Vagina (tissue), 2 donors: ENCODE measurements at regions of chr13 and their contacts with region 1.

Region 1: GRCh38 chr13:20489185-20489820 is 36.4 kb downstream of the CRYL1 start:
- DNase-seq: no peak
- H3K4me3 ChIP-seq: no peak overlapping the region
- H3K27ac ChIP-seq: no peak overlapping the region
- H3K4me1 ChIP-seq: no peaks in the 10 kb centered on the region
- H3K27me3 ChIP-seq: no peaks in the 10 kb centered on the region
- CTCF ChIP-seq: no peak
- POLR2A ChIP-seq: no peak

Region 2: GRCh38 chr13:20197361-20197834 is 291.9 kb before region 1 on chr13:
- intact Hi-C with region 1: loop called (anchors 10 kb)
- DNase-seq: no peak
- H3K4me3 ChIP-seq: no peak overlapping the region
- H3K27ac ChIP-seq: no peak overlapping the region
- H3K4me1 ChIP-seq: peaks cover 20% of the 10 kb centered on the region
- H3K27me3 ChIP-seq: peaks cover 6% of the 10 kb centered on the region
- CTCF ChIP-seq: peak; percentile 22 to 49 (median 44)
- POLR2A ChIP-seq: no peak

Region 3: GRCh38 chr13:20534038-20534608 is 44.8 kb after region 1 on chr13:
- intact Hi-C with region 1: no loop called
- DNase-seq: no peak
- H3K4me3 ChIP-seq: no peak overlapping the region
- H3K27ac ChIP-seq: no peak overlapping the region
- H3K4me1 ChIP-seq: no peaks in the 10 kb centered on the region
- H3K27me3 ChIP-seq: no peaks in the 10 kb centered on the region
- CTCF ChIP-seq: no peak
- POLR2A ChIP-seq: no peak

Region 4: GRCh38 chr13:21069561-21070004 is 580.3 kb after region 1 on chr13:
- intact Hi-C with region 1: no loop called
- DNase-seq: no peak
- H3K4me3 ChIP-seq: no peak overlapping the region
- H3K27ac ChIP-seq: peak overlapping the region; percentile 52
- H3K4me1 ChIP-seq: peaks cover 23% of the 10 kb centered on the region
- H3K27me3 ChIP-seq: no peaks in the 10 kb centered on the region
- CTCF ChIP-seq: no peak
- POLR2A ChIP-seq: no peak